Lower lobe of right lung (tissue), 2 donors: ENCODE measurements at regions of chr4 and their contacts with region 1.

Region 1: DNA sequence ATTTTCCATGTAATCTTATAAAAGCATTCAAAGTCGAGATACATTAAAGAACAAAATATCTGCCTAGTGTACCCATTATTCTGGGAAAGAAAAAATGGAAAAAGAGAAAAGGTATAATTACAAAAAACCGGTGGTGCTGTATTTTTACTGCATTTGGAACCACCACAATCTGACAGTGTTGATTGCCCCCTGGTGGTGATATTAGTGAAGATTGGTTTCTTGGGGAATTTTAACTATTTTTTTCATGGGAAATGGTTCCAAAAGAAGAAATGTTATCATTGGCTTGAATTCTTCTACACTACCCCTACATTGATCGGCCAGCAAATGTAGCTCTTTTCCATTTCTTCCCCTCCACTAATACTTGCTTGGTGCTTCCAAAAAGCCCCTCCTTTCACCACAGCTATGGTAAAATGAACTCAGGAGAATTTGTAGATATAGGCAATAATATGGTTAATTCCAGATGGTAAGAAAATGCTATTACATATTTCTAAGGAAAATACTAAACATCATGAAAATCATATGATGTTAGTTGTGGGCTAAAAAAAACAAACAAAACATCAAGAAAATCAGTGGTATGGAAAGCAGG is 50.0 kb downstream of the COX18 start:
- DNase-seq: no peak
- ATAC-seq: no peak
- H3K4me3 ChIP-seq: no peak overlapping the region
- H3K27ac ChIP-seq: no peak overlapping the region
- H3K4me1 ChIP-seq: no peaks in the 10 kb centered on the region
- H3K27me3 ChIP-seq: no peaks in the 10 kb centered on the region
- CTCF ChIP-seq: peak; percentile 72

Region 2: DNA sequence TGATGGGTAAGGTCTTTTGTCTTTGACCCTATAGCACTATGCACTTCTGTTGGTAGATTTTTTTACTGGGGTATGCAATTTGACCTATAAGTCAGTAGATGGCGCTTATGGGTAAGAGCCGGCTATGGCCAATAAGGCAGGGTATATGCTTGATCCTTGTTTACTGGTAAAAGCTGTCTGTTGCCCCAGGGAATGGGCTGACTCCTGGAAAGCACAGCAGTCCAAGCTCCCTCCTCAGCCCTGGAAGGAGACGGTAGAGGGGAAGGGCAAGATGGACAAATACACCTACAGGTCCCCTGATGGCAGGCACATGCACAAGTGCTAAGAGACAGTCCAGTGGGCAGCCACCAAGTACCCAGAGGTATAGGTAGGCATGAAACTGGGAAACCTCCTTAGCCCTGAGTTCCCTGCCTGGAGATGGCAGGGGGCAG is 514.2 kb before region 1 on chr4:
- intact Hi-C with region 1: loop called (anchors 5 kb)
- DNase-seq: no peak
- ATAC-seq: peak; percentile 75 to 81
- H3K4me3 ChIP-seq: no peak overlapping the region
- H3K27ac ChIP-seq: no peak overlapping the region
- H3K4me1 ChIP-seq: no peaks in the 10 kb centered on the region
- H3K27me3 ChIP-seq: no peaks in the 10 kb centered on the region
- CTCF ChIP-seq: peak; percentile 62